PC-9 (cell line): ENCODE measurements at regions of chr6 and their contacts with region 1.

Region 1: GRCh38 chr6:11317885-11318771 is 85.7 kb upstream of the NEDD9 start:
- DNase-seq: peak; percentile 84 to 96
- H3K4me3 ChIP-seq: peak overlapping the region; percentile 24; the same call in 1 of the 2 replicates
- H3K27ac ChIP-seq: peak overlapping the region; percentile 85
- H3K4me1 ChIP-seq: peaks cover 34% of the 10 kb centered on the region
- H3K27me3 ChIP-seq: no peaks in the 10 kb centered on the region
- CTCF ChIP-seq: no peak

Region 2: DNA sequence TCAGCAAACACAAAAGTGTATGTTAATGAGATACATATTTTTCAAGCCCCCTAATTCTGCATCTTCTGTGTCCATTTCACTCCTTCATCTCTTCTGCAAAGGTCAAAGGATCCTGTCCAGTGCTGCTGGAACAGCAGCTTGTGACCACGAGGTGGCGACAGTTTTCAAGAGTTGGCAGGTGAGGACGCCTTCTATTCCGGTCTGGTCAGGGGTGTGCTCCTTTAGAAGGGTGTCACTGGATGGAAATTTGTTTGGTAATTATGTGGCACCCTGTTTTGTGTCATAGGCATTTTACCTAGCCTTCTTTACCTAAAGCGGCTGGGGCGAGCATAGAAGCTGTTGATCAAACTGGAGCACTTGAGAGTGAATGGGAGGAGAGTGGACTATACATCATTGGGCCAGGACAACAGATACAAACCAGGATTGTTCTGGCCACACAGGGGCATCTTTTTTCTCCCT is 173.7 kb before region 1 on chr6:
- CTCF ChIA-PET with region 1: no interaction called
- POLR2A ChIA-PET with region 1: no interaction called
- intact Hi-C with region 1: loop called (anchors 1 kb)
- DNase-seq: peak; percentile 59 to 82
- H3K4me3 ChIP-seq: no peak overlapping the region
- H3K27ac ChIP-seq: no peak overlapping the region
- H3K4me1 ChIP-seq: no peaks in the 10 kb centered on the region
- H3K27me3 ChIP-seq: no peaks in the 10 kb centered on the region
- CTCF ChIP-seq: peak; percentile 84

Region 3: GRCh38 chr6:11161031-11161966 is 156.8 kb before region 1 on chr6:
- CTCF ChIA-PET with region 1: no interaction called
- POLR2A ChIA-PET with region 1: no interaction called
- intact Hi-C with region 1: no loop called
- DNase-seq: no peak
- H3K4me3 ChIP-seq: no peak overlapping the region
- H3K27ac ChIP-seq: no peak overlapping the region
- H3K4me1 ChIP-seq: no peaks in the 10 kb centered on the region
- H3K27me3 ChIP-seq: no peaks in the 10 kb centered on the region
- CTCF ChIP-seq: no peak

Region 4: DNA sequence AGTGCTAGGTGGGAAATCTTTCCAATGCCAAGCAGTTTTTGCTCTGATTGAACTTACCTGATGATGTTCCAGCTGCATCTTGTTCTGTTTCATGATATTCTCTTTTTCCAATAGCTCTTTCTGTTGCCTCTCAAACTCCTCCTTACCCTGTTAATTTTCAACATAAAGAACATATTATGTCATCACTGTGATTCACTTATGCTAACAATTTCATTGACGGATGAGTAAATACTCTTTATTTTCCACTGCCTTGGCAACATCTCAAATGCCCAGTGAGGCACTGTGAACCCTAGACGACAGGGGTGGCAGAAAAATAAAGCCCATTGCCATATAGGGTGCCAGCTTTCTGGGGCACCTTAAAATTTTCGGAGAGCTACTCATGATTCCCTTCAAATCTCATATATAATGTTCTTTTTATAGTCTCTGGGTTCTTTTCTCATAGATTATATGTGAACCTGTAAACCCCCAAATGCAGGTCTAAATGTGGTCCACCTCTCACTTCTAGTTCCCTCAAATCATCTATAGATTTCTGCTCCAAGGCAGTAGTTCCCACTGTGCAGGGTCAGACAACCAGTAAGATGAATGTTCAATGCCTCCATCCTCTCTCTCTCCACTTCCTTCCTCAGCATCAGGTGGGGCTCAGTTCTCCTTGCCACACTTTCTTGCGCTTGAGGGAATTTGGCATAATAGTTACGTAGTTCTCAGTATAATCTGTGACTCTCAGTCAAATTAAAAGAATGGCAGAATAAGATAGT is 129.8 kb before region 1 on chr6:
- CTCF ChIA-PET with region 1: no interaction called
- POLR2A ChIA-PET with region 1: no interaction called
- intact Hi-C with region 1: no loop called
- DNase-seq: no peak
- H3K4me3 ChIP-seq: no peak overlapping the region
- H3K27ac ChIP-seq: no peak overlapping the region
- H3K4me1 ChIP-seq: no peaks in the 10 kb centered on the region
- H3K27me3 ChIP-seq: no peaks in the 10 kb centered on the region
- CTCF ChIP-seq: no peak

Region 5: DNA sequence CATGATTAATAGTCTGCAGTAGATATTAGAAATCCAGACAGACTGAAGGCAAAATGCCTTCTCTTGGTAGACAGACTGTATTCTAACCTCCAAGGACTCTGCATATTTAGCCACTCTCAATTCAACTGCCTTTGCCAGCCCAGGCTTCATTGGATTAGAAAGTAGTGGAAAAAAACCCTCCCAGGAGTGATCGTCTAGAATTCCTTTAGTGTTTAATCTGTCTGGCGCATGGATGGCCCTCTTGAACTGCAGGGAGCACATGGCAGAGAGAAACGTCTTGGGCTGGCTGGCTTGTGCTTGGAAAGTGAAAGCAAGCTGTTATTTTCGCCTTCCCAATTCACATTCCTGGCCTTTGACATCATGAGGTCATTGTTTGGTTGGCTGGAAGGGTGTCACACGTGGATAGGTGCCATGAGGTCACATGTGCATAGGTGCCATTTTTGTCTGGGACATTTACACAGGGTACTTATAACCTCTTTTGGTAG is 54.8 kb before region 1 on chr6:
- CTCF ChIA-PET with region 1: no interaction called
- POLR2A ChIA-PET with region 1: interaction called, 17 read pairs
- intact Hi-C with region 1: no loop called
- DNase-seq: peak; percentile 37 to 42
- H3K4me3 ChIP-seq: no peak overlapping the region
- H3K27ac ChIP-seq: no peak overlapping the region
- H3K4me1 ChIP-seq: peaks cover 18% of the 10 kb centered on the region
- H3K27me3 ChIP-seq: no peaks in the 10 kb centered on the region
- CTCF ChIP-seq: no peak

Region 6: DNA sequence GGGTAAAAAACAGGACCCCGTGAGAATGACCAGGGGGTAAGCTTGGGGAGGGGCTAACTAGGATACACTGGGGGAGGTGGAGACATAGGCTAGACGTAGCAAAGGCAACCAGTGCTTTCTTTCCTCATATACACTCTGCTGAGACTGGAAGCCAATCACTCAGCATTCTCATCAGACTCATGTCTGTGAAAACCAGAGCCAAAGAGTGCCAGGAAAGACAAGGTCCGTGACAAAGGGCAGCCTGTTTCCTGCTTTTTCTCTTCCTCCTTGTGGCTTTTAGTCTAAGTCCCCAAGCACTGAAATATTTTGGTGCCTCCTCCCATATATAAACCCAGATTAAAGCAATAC is 12.3 kb after region 1 on chr6:
- CTCF ChIA-PET with region 1: no interaction called
- POLR2A ChIA-PET with region 1: interaction called, 13 read pairs
- intact Hi-C with region 1: no loop called
- DNase-seq: no peak
- H3K4me3 ChIP-seq: no peak overlapping the region
- H3K27ac ChIP-seq: no peak overlapping the region
- H3K4me1 ChIP-seq: no peaks in the 10 kb centered on the region
- H3K27me3 ChIP-seq: no peaks in the 10 kb centered on the region
- CTCF ChIP-seq: no peak

Region 7: DNA sequence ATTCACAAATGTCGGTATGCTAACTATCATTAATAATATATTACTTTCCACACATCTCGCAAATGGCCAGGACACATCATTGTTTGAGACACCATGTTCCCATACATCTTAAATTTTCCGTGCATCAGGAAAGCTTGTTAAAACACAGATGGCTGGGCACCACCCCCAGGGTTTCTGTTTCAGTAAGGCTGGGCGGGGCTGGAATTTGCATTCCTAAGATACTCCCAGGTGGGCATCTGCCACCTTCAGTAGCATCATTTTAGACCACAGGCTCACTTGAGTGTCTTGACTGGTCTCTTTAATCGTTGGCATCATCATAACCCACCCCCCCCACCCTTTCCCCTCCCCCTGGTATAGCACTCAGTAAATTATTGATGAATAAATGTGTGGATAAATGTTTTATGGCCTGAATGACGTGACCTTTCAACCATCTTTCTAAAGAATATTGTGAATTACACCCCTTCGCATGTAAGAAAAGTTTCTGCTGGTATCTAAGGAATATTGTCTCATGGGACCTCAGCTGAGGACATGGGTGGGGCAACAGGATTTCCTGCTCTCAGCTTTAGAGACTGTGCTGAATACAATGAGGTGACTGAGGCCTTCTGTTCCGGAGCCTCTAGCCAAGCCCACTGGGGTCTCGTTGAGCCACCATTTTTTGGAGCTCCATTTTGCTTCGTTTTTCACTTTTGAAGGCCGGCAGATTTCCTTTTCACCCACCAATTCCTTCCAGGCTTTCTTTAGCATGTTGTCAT is 38.5 kb after region 1 on chr6:
- CTCF ChIA-PET with region 1: no interaction called
- POLR2A ChIA-PET with region 1: no interaction called
- intact Hi-C with region 1: loop called (anchors 1 kb)
- DNase-seq: no peak
- H3K4me3 ChIP-seq: no peak overlapping the region
- H3K27ac ChIP-seq: peak overlapping the region; percentile 74
- H3K4me1 ChIP-seq: peaks cover 14% of the 10 kb centered on the region
- H3K27me3 ChIP-seq: no peaks in the 10 kb centered on the region
- CTCF ChIP-seq: no peak

Region 8: GRCh38 chr6:11392778-11393507 is 74.8 kb after region 1 on chr6:
- CTCF ChIA-PET with region 1: no interaction called
- POLR2A ChIA-PET with region 1: interaction called, 4 read pairs
- intact Hi-C with region 1: loop called (anchors 1 kb)
- DNase-seq: peak; percentile 75 to 77
- H3K4me3 ChIP-seq: no peak overlapping the region; the same call in 1 of the 2 replicates
- H3K27ac ChIP-seq: peak overlapping the region; percentile 89
- H3K4me1 ChIP-seq: peaks cover 63% of the 10 kb centered on the region
- H3K27me3 ChIP-seq: no peaks in the 10 kb centered on the region
- CTCF ChIP-seq: no peak